ENCODE measurements at regions of chr3 and their contacts with region 1.

Region 1: DNA sequence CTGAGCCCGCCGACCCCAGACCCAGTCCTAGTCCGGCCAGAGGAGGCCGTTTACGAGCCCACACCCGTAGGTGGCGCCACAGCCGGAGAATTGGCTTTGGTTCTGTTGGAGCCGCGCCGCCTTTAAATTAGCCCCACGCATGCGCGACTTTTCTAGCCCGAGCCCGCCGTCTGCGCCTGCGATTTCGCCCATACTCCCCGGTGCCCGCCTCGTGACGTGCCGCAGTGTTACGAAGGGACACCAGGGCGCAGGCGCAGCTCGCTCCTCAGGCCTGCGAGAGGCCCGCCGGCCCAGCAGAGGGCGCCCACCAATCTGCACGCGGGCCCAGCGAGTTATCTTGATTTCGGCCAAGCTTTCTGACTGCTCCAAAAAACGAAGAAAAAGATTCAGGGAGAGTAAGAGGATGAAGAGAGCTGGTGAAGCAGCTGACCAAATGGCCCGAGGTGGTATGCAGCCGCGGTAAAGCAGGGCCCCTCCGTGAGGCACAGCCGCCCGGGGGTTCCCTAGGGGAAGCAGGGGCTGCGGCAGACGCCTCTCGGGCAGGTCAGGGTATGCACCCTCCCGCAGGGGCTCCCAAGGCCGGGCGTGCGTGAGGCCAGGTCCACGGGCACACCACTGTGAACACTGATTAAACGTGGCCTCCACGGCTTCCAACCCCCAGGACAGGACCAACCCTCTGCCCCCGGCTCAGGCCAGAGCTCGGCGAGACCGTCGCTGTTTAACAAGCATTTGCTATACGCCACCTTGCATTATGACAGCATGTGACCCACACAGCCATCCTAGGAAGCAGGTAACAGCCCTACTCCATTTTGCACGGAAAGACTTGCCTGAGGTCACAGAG is 32.8 kb downstream of the RPN1 start:
- DNase-seq: peak; percentile 71
- H3K4me3 ChIP-seq: peak overlapping the region; percentile 62
- H3K27me3 ChIP-seq: no peaks in the 10 kb centered on the region
- CTCF ChIP-seq: peak; percentile 95

Region 2: DNA sequence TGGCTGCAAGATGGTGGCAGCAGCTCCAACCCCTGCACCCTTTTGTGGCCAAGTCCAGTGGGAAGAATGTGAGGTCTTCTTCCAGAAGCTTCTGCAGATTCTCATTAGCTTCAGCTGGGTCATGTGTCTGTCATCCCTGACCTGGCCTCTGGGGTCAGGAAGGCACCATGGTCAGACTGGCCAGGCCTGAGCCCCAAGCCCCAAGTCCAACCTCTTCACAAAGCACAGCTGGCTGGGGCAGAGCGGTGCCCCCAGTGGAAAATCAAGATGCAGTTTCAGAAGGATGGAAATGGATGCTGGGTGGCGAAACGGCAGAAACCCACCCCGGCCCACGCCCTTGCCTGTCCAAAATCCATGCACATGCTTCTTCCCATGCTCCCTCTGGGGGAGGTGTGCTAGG is 108.9 kb before region 1 on chr3:
- CTCF ChIA-PET with region 1: no interaction called
- POLR2A ChIA-PET with region 1: no interaction called
- DNase-seq: no peak
- H3K4me3 ChIP-seq: no peak overlapping the region
- H3K27me3 ChIP-seq: no peaks in the 10 kb centered on the region
- CTCF ChIP-seq: no peak

Region 3: DNA sequence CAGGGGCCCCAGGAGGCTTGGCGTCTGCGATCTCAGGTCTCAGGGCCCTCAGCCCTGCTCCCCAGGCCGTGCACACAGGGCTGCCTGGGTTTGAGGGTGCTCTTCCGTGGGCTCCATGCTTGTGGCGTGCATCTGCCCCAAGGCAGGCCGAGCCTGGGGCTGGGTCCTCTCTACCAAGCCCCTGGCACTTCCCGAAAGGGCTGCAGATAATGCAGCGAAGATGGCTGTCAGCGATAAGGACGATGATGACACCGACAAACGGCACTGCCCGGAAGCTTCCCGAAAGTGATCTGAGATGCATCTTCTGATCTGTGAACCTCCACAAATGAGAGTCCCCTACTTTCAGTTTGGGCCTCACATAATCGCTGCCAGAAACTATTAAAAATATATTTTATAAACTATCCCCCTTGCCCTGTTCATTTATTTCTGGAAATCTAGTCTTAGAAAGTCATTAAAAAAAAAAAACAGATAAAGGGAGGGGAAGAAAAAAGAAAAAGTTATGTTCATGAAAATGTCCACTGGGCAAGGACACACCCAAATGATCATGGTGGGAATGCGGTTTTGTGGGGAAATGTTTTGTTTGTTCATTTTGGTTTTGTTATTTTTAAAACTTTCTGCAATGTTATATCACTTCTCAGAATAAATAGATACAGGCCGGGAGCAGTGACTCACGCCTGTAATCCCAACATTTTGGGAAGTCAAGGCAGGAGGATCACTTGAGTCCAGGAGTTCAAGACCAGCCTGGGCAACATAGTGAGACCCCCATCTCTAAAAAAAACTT is 18.7 kb before region 1 on chr3:
- CTCF ChIA-PET with region 1: interaction called, 11 read pairs
- POLR2A ChIA-PET with region 1: no interaction called
- DNase-seq: no peak
- H3K4me3 ChIP-seq: no peak overlapping the region
- H3K27me3 ChIP-seq: no peaks in the 10 kb centered on the region; the same call in 1 of the 2 replicates
- CTCF ChIP-seq: no peak

Region 4: GRCh38 chr3:128845778-128846485 is 228.2 kb after region 1 on chr3:
- CTCF ChIA-PET with region 1: interaction called, 18 read pairs
- POLR2A ChIA-PET with region 1: no interaction called
- DNase-seq: no peak
- H3K4me3 ChIP-seq: peak overlapping the region; percentile 36
- H3K27me3 ChIP-seq: no peaks in the 10 kb centered on the region
- CTCF ChIP-seq: peak; percentile 60